ENCODE measurements at regions of chr17 and their contacts with region 1.

Region 1: DNA sequence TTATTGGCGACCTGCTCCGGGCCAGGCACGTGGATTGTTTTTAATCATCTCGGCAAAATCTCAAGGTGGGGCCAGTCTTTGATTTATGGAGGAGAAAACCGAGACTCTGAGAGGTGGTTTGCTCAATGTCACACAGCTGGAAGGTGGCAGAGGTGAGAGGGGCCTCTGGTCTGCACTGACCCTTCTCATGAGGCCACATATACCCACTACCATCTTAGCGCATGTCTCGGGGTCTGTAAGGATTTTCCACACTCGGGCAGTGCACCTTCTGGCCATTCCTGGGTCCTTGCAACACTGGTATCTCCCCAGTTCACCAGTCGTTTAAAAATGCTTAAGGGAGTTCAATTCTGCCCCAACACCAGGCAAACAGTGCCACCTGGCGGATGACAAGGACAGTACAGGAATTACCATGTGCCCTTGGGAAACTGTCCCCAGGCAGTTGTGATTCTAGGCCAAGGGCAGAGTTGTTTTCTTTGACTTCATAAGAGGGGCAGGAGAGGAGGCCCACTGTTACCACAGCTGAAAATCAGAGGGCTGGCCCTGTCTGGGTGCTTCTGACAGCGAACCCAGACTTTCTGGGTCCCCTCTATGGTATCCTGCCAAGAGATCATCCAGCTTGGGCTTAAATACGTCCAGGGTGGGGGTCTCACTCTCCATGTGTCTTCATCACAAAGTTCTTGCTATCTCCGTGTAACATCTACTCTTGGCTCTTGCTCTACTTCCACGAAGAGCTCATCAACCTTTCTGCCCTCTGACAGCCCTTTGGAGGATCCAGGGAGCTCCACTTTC is 39.4 kb upstream of the RAI1 start:
- DNase-seq: peak; percentile 89

Region 2: DNA sequence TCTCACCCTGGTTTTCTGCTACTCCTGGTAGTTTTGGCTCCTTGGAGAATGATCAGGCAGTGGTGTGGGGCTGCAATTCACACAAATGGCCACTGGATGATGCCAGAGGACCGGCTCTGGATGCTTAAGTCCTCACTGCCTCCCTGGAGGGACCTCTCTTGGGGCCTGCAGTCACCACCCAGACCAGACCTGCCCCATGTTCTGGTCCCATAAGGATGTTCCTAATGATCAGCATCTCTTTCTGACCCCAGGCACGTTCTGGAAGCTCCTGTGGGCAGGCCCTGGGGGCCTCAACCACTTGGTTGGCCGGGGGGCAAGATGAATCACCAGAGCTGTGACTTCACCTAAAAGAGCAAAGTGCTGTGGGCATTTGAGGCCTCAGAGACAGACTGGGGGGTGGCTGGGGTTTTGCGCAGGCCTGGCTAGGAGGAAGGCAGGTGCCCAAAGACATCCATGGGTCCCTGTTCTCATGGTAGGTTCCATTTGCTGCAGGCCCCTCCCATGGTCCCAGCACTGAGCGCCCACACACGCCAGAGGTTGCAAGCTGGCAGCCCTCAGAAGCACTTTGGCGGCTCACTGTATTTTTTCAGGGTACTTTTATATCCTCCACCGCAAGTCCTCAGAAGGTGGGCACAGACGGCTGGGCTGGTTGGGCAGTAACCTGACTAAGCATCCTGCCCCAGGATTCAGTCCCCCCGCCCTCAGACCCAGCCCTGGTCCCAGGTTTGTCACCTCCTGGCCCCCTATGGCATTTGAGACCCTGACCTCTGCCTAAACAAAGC is 285.5 kb before region 1 on chr17:
- intact Hi-C with region 1: loop called (anchors 1 to 2 kb)
- DNase-seq: peak; percentile 88

Measured in posterior vena cava (tissue), 2 donors.